PC-9 (cell line): ENCODE measurements at regions of chr5 and their contacts with region 1.

Region 1: DNA sequence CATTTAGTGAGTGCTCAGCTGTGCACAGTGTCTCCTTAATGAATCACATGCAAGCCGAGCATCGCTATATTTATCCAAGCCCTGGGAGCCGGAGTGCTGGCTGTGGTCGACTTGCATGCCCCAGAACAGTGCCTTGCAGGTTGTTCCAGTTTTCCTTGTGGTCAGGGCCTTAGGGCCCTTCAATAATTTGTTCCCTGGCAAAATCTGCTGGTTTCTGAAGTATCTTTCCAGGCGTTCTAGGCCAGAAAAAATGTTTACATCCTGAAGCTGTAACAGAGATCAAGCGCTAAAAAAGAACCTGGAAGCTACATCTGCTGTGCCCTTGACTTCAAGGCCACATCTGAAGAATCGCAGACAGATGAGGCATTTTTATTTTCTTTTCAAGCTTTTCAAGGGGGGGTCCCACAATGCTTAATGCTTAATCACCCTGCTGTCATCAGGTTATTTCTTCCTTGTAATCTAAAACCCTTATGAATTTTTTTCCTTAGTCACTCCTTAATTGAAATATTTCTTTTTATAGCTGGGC is 105.8 kb downstream of the DOCK2 start:
- DNase-seq: peak; percentile 50 to 92
- H3K4me3 ChIP-seq: peak overlapping the region; percentile 12; the same call in 1 of the 2 replicates
- H3K27ac ChIP-seq: peak overlapping the region; percentile 91
- H3K4me1 ChIP-seq: peaks cover 48% of the 10 kb centered on the region
- H3K27me3 ChIP-seq: no peaks in the 10 kb centered on the region
- CTCF ChIP-seq: no peak

Region 2: DNA sequence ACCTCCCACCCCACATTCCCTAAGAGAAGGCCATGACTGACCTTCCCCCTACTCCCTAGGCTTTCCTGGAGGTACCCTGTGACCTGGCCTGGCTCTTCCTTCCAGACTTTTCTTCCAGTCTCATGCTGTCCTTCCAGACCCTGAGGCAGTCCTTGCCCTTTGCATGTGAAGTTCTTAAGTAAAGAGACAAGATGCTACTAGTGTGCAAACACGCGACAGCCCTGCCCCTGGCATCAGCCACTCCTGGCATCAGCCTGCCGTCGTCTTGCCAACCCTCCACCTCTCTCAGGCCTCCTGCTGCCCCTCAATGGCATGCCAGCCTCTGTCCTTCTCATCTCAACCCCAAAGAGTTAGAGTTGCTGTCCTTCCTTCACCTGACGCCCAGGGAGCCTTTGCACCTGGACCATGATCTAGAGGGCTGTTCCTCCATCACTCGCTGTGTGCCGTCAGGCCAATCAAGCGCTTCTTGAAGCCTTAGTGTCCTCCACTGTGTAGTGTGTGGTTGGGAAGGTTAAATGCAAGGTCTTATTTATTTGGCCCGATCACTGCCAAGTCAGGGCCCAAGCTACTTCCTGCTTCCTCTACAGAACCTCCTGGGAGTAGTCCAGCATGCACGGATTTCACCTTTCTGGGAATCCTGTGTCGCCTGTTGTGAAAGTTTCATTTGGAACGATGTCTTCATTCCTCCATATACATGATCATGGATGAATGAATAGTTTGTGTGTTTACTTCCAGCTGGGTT is 1389.4 kb before region 1 on chr5:
- CTCF ChIA-PET with region 1: no interaction called
- POLR2A ChIA-PET with region 1: no interaction called
- intact Hi-C with region 1: loop called (anchors 10 kb)
- DNase-seq: no peak
- H3K4me3 ChIP-seq: no peak overlapping the region
- H3K27ac ChIP-seq: peak overlapping the region; percentile 4; the same call in 1 of the 2 replicates
- H3K4me1 ChIP-seq: peaks cover 73% of the 10 kb centered on the region
- H3K27me3 ChIP-seq: no peaks in the 10 kb centered on the region
- CTCF ChIP-seq: no peak

Region 3: DNA sequence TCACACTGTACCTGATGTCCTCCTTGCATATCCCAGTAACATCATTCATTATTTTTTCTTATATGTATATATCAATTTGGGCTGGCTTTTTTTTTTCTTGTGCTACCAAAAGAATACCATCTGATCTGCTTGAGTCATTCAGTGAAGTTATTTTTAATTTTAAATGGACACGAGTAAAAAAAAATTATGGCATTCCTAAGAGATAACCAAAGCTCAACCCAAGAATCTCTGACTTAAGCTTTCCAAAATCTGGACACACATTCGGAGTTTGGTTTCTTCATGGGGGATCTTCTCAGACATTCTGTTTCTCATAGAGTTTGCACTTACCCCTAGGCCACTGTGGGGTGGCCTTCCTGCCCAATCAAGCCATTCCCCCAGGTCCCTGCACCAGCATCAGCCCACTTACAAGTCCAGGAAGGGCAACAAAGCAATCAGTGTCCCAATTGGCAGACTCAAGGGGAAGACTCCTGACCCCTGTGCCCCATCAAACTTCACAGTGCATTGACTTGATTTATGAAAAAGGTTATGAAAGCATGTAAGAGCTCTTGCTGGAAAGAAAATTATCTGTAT is 208.4 kb before region 1 on chr5:
- CTCF ChIA-PET with region 1: no interaction called
- POLR2A ChIA-PET with region 1: no interaction called
- intact Hi-C with region 1: no loop called
- DNase-seq: no peak
- H3K4me3 ChIP-seq: no peak overlapping the region
- H3K27ac ChIP-seq: no peak overlapping the region
- H3K4me1 ChIP-seq: no peaks in the 10 kb centered on the region
- H3K27me3 ChIP-seq: peaks cover 18% of the 10 kb centered on the region
- CTCF ChIP-seq: no peak

Region 4: DNA sequence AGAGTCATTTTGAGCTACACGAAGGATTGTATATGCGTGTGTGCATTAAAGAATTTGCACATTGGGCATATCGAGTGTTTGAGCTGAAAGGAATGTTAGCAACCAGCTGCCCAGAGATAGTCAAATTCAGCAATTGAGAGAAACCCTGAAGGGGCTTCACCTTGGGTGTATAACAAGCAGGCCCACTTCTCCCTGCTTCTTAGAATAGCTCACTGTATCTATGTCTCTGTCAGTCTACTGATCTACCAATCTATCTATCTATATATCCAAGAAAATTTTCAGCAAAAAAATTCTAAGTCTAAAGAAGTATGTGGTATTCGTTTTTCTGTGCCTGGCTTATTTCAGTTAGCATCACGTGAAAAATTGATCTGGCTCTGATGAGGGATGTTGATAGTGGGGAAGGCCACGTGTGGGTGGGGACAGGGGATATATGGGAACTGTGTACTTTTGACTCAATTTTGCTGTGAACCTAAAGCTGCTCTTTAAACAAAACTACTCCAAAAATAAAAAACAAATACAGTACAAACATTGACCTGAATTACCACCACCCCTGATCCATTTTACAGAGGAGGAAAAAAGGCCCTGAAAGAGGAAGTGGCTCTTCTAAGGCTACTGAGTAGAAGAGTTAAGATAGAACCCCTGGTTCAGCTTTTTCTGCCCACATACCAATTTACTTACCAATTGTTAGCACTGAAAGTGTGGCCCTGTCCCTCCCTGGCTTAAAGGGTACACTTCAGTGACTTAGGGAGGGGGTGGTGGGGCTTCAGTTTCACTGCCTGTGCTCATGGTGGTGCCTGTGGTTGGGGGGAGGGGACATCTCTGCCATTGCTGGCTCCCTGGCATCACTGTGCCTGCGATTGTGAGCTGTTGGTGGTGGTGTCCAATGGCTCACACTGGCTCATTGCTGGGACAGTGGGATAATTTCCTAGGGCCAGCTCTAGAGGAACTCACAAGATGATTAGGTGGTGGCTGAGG is 36.1 kb after region 1 on chr5:
- CTCF ChIA-PET with region 1: no interaction called
- POLR2A ChIA-PET with region 1: no interaction called
- intact Hi-C with region 1: no loop called
- DNase-seq: no peak
- H3K4me3 ChIP-seq: no peak overlapping the region
- H3K27ac ChIP-seq: no peak overlapping the region
- H3K4me1 ChIP-seq: no peaks in the 10 kb centered on the region
- H3K27me3 ChIP-seq: no peaks in the 10 kb centered on the region
- CTCF ChIP-seq: no peak

Region 5: GRCh38 chr5:169805527-169805934 is 62.7 kb after region 1 on chr5:
- CTCF ChIA-PET with region 1: no interaction called
- POLR2A ChIA-PET with region 1: no interaction called
- intact Hi-C with region 1: no loop called
- DNase-seq: no peak
- H3K4me3 ChIP-seq: no peak overlapping the region
- H3K27ac ChIP-seq: no peak overlapping the region
- H3K4me1 ChIP-seq: peaks cover 38% of the 10 kb centered on the region
- H3K27me3 ChIP-seq: no peaks in the 10 kb centered on the region
- CTCF ChIP-seq: no peak